ENCODE measurements at regions of chr4 and their contacts with region 1.

Region 1: GRCh38 chr4:37977471-37978247 is 17.5 kb downstream of the PTTG2 start:
- DNase-seq: peak; percentile 38
- H3K4me3 ChIP-seq: peak overlapping the region; percentile 65 to 82
- H3K27ac ChIP-seq: peak overlapping the region; percentile 82 to 88
- H3K4me1 ChIP-seq: no peaks in the 10 kb centered on the region
- H3K27me3 ChIP-seq: no peaks in the 10 kb centered on the region
- CTCF ChIP-seq: peak in 3 of 4 experiments; percentile 41 to 65 (median 60)
- POLR2A ChIP-seq: no peak

Region 2: GRCh38 chr4:37686373-37687193 is 291.1 kb before region 1 on chr4 and contains the start of gene RELL1:
- intact Hi-C with region 1: loop called (anchors 5 kb)
- DNase-seq: peak; percentile 100
- H3K4me3 ChIP-seq: peak within 1 kb of the TSS; percentile 89 to 93
- H3K27ac ChIP-seq: peak within 1 kb of the TSS; percentile 90 to 92
- H3K4me1 ChIP-seq: no peaks in the 10 kb centered on the region
- H3K27me3 ChIP-seq: no peaks in the 10 kb centered on the region
- CTCF ChIP-seq: peak in 1 of 4 experiments; percentile 12
- POLR2A ChIP-seq: peak; percentile 26
- total RNA-seq, gene RELL1: 18.9 to 26.2 TPM

Region 3: DNA sequence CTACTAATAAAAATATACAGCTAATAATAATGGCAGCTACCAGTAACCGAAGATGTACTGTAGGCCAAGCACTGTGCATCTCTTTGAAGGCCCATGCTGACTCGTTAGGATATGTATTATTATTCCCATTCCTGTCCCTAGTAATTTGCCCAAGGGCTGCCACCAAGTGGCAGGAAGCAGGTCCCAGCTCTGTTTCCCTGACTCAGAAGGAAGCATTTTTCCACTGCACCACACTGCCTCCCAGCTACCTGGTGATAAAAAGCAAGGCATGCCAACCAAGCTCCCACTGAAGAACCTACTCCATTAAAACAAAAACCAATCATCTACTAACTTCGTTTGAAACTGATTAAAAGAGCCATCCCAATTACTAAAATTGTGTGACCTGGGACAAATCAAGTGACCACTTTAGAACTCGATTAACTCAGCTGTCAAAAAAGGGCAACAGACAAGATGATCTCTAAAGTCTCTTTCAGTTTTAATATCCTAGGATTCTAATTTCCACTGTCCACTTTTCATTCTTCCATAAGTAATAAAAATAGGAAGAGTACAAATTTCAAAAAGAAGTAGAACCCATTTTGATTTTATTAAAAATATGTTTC is 175.5 kb before region 1 on chr4:
- intact Hi-C with region 1: loop called (anchors 5 kb)
- DNase-seq: peak; percentile 33
- H3K4me3 ChIP-seq: no peak overlapping the region
- H3K27ac ChIP-seq: no peak overlapping the region
- H3K4me1 ChIP-seq: no peaks in the 10 kb centered on the region
- H3K27me3 ChIP-seq: no peaks in the 10 kb centered on the region
- CTCF ChIP-seq: peak in 3 of 4 experiments; percentile 27 to 67 (median 63)
- POLR2A ChIP-seq: no peak

Region 4: GRCh38 chr4:37826295-37827029 is 151.2 kb before region 1 on chr4 and contains the start of gene PGM2:
- intact Hi-C with region 1: loop called (anchors 5 kb)
- DNase-seq: peak; percentile 86
- H3K4me3 ChIP-seq: peak within 1 kb of the TSS; percentile 68 to 87
- H3K27ac ChIP-seq: peak within 1 kb of the TSS; percentile 79 to 83
- H3K4me1 ChIP-seq: no peaks in the 10 kb centered on the region
- H3K27me3 ChIP-seq: no peaks in the 10 kb centered on the region
- CTCF ChIP-seq: peak in 2 of 4 experiments; percentile 23 to 27
- POLR2A ChIP-seq: peak; percentile 94
- total RNA-seq, gene PGM2: 23.2 to 25.3 TPM

Region 5: DNA sequence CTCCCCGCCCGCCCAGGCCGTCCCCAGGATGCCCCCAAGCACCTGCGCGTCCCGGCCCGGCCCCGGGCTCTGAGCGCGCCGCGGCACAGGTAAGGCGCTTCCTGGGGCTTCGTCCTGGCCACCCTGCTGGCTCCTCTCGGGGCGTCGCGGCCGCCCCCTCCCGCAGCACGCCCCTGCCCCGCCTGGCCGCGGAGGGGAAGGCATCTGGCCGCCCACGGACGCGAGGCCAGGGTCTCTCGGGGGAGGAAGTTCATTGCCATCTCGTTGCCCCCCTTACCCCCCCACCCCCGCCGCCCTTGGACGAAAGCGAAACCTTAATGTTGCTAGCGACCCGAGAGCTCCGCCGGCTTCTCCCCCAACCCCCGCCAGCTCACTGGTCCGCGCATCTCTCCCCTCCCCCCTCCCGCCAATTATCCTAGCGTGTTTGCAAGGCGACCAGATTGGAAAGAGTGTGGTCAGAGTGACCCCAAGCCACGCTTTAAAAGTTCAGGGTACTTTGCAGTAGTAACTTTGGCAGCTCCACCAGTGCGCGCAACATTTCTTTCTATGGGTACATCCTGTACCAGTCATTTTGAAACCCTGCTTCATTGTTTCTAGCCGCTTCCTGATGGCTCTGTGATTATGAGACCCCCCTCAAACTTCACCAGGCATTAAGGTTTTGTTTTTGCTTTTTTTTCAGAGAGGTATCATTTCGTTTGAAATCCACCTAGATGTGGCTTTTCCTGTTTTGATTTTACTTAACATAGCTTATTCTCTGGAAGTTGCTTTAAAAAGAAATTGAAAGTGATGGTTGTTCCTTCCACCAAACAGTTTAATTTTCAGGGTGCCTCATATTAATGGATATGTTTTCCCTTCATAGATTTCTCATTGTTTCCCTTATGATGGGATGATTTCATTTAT is 86.1 kb before region 1 on chr4:
- intact Hi-C with region 1: loop called (anchors 5 kb)
- DNase-seq: peak; percentile 56
- H3K4me3 ChIP-seq: peak overlapping the region; percentile 86 to 93
- H3K27ac ChIP-seq: peak overlapping the region; percentile 81 to 90
- H3K4me1 ChIP-seq: no peaks in the 10 kb centered on the region
- H3K27me3 ChIP-seq: no peaks in the 10 kb centered on the region
- CTCF ChIP-seq: no peak
- POLR2A ChIP-seq: no peak

Region 6: DNA sequence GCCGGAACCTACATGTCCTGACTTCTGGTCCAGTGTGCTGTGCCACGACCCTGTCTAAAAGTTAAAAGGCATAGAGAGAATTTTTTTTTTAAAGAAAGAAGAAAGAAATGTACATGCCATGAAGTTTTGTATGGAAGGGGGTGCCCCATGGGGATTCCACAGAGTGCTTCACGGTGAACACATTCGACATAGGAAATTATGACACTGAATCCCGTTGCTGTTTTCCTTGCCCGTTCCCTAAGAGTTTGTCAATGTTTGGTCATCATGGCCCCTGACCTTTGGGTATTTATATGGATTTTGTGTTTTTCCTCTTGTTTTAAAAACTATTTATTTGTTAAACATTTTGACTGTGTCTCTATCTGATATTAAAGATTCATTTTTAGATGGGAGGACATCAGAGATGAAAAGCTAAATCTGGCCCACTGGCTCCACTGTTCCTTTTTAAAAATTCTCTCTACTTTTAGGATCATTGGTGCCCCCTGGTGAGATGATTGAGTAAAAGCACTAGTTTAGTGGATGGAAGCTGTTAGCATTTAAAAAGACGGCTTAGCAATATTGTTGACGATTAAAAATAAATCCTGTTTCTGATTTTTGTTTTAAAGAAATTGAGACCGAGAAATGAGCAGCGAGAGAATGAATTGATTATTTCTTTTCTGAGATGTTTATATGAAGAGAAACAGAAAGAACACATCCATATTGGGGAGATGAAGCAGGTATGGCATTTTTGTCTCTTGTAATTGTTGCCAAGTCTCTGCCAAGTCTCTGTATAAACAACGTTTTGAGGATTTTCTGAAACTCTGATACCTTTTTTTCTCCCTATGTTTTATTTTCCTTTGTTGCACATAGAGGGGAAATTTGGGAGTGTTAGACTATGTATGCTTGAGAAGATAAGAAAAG is 57.6 kb after region 1 on chr4:
- intact Hi-C with region 1: loop called (anchors 5 kb)
- DNase-seq: peak; percentile 63
- H3K4me3 ChIP-seq: no peak overlapping the region
- H3K27ac ChIP-seq: no peak overlapping the region
- H3K4me1 ChIP-seq: no peaks in the 10 kb centered on the region
- H3K27me3 ChIP-seq: no peaks in the 10 kb centered on the region
- CTCF ChIP-seq: peak; percentile 32 to 84 (median 72)
- POLR2A ChIP-seq: no peak

Measured in prostate gland (tissue), 2 donors.